Tibial artery (tissue), 4 donors: ENCODE measurements at regions of chr6 and their contacts with region 1.

Region 1: DNA sequence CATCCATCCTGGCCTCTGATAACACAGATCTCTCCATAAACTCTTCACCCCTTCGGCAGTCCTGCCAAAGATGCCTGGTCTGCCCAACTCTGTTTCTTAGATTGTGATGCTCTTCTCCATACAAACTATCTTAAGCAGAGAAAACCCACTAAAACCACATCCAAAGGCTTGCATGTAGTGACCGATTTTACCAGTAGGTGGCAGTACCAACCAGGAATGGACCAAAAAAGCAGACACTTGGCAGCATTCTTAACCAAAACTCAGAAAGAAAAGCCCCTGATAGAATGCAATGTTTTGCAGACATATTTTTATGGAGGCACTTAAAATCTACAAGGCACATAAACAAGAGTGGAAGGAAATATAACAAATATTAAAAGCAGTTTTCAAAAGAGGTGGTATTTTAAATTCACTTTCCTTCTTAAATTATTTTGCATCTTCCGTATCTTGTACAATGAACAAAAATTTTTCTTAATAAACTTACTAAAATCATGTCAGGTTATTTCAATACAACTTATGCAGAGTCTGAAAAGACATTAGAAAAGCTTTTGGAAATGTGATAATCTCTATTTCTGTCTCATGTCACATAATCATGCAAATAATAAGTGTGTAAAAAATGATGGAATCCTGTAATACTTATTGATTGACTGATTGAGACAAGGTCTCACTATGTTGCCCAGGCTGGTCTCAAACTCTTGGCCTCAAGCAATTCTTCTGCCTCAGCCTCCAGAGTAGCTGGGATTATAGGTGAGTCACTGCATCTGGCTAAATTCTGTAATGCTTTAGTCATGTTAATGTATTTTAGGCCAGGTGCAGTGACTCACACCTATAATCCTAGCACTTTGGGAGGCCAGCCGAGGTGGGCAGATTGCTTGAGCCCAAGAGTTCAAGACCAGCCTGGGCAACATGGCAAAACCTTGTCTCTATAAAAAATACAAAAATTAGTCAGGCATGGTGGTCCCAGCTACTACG is 29.4 kb downstream of the LRP11 start:
- DNase-seq: peak in 1 of 2 donors; percentile 74
- H3K4me3 ChIP-seq: no peak overlapping the region
- H3K27ac ChIP-seq: no peak overlapping the region
- H3K4me1 ChIP-seq: peaks cover 0 to 8% (median 0%) of the 10 kb centered on the region in 4 donors
- H3K27me3 ChIP-seq: no peaks in the 10 kb centered on the region
- CTCF ChIP-seq: peak; percentile 85 to 91

Region 2: GRCh38 chr6:149864578-149865535 is 30.1 kb after region 1 on chr6:
- intact Hi-C with region 1: loop called (anchors 5 kb)
- DNase-seq: peak in 1 of 2 donors; percentile 61
- H3K4me3 ChIP-seq: peak overlapping the region; percentile 74 to 77
- H3K27ac ChIP-seq: peak overlapping the region; percentile 90 to 96
- H3K4me1 ChIP-seq: peaks cover 0 to 28% (median 10%) of the 10 kb centered on the region in 4 donors
- H3K27me3 ChIP-seq: no peaks in the 10 kb centered on the region
- CTCF ChIP-seq: peak; percentile 68 to 72

Region 3: DNA sequence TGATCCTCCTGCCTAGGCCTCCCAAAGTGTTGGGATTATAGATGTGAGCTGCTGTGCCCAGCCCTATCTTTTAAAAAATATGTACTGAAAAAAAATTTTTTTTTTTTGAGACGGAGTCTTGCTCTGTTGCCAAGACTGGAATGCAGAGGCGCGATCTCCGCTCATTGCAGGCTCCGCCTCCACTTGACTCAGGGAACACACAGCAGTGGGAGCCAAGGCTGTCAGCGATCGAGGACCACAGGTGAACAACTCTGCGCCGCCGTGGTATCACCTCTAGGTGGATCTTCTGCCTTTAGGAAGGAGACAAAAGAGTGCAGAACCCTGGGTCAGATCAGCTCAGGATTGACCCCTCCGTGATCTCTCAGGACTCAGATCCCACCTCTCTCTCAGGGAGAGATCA is 49.4 kb after region 1 on chr6:
- intact Hi-C with region 1: no loop called
- DNase-seq: no peak
- H3K4me3 ChIP-seq: no peak overlapping the region
- H3K27ac ChIP-seq: no peak overlapping the region
- H3K4me1 ChIP-seq: peaks cover 0 to 10% (median 4%) of the 10 kb centered on the region in 4 donors
- H3K27me3 ChIP-seq: no peaks in the 10 kb centered on the region
- CTCF ChIP-seq: no peak

Region 4: DNA sequence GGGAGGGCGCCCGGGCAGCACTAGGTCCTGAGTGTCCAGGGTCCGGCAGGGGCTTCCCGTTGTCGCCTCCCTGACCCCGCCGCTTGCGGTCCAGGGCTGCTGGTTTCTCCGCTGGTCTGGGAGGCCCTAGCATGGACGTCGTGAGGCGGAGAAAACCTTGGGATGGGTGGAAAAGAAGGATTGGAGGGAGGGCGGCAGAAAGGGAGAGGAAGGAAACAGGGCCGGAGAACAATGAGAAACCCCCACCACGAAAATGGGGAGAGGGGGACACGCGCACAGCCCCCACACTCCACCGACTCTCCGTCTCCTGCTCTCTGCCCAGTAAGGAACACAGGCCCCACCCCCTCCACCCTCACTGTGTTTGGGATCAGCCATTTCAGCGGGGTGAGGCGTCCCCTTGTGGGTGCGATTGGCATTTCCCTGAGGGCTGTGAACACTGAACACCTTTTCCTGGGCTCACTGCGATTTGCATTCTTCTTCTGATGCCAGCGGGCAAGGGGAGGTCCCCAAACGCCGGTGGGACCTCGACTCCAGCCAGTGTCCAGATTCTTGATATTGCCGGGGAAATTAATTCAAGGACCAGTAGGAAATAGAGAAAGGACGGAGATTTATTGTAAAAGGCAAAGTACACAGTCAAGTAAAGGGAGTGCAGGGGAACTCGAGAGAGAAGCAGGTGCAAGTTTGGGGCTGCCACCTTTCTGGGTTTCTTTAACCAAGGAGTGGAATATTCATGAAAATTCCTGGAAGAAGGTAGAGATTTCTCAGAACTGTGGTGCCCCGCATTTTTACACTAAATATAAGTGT is 91.4 kb after region 1 on chr6:
- intact Hi-C with region 1: loop called (anchors 2 kb)
- DNase-seq: peak; percentile 93 to 96
- H3K4me3 ChIP-seq: peak overlapping the region; percentile 54 to 64
- H3K27ac ChIP-seq: peak overlapping the region; percentile 58 to 63
- H3K4me1 ChIP-seq: peaks cover 0 to 27% (median 19%) of the 10 kb centered on the region in 4 donors
- H3K27me3 ChIP-seq: peaks cover 0 to 27% of the 10 kb centered on the region in 2 donors
- CTCF ChIP-seq: peak; percentile 94 to 99

Region 5: DNA sequence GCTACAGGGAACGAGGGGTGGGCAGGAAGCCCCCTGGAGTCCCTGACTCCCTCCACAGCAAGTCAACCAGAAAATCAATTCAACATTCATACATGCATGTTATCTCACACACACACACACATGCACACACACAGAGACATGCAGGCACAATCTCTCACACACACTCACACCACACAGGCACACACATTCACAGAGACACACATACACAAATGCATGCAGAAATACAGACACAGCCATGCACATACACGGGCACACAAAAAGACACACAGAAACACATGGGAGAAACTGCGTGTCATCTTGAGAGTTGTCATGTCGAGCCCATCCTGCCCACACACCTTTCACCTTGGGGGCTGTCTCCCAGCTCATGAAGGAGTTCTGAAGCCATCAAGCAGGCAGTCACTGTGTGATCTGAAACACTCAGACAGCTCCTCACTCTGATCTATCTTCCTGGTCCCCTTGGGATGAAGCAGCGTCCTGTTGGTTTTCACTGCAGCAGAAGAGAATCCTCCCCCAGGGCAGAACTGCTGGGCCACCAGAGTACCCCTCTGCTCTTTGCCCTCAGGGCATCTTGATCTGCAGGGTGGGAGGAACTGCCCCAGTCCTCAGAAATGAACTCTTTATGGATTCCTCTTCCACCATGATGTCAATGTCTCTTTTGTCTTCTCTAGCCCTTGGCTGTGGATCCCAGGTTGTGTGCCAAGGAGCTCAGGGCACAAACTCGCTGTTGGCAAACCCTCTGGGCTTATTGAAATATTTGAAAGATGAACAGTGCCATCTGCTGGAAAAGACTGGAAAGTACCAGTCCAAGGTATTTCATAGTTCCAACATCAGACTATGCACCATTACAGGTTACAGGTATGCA is 181.8 kb after region 1 on chr6:
- intact Hi-C with region 1: loop called (anchors 5 kb)
- DNase-seq: peak; percentile 37 to 63
- H3K4me3 ChIP-seq: no peak overlapping the region
- H3K27ac ChIP-seq: no peak overlapping the region
- H3K4me1 ChIP-seq: peaks cover 0 to 12% (median 1%) of the 10 kb centered on the region in 4 donors
- H3K27me3 ChIP-seq: peaks cover 0 to 63% of the 10 kb centered on the region in 2 donors
- CTCF ChIP-seq: peak; percentile 57 to 74